ENCODE measurements at regions of chr5 and their contacts with region 1.

Region 1: DNA sequence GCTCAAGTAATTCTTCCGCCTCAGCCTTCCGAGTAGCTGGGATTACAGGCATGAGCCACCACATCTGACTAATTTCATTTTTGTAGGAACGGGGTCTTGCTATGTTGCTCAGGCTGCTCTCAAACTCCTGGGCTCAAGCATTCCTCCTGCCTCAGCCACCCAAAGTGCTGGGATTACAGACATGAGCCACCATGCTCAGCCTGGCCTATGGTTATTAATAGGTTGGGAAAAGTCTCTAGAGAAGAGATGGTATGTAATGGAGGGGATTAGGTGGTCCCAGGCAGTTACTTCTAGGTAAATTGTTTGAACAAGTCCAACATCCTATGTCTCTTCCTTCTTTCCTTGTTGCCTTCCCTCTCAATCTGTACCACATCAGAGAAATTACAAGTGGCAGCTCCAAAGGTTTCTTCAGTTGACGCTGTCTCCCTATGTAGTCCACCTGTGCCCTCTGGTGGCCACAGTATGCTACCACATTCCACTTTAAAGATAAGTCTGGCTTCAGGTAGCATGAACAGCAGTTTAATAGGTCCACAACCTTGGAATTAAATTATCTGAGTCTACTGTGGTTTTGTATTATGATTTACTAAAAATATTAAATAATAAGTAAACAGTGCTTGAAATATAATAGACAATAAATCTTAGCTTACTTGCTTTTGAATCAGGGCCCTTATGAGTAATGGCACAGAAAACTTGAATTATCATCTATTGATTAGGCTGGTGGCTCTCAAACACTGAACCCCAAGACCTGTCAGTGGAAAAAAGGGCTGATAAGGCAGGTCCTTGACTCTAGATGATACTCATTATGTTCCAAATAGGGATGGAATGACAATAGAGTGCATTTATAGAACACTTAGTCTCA is 9.7 kb downstream of the TIGD6 start:
- DNase-seq: peak; percentile 74
- ATAC-seq: peak; percentile 94
- H3K4me3 Mint-ChIP-seq: no peak overlapping the region
- H3K27ac Mint-ChIP-seq: no peak overlapping the region
- H3K4me1 Mint-ChIP-seq: no peaks in the 10 kb centered on the region
- H3K27me3 Mint-ChIP-seq: no peaks in the 10 kb centered on the region
- CTCF ChIP-seq: peak; percentile 88

Region 2: DNA sequence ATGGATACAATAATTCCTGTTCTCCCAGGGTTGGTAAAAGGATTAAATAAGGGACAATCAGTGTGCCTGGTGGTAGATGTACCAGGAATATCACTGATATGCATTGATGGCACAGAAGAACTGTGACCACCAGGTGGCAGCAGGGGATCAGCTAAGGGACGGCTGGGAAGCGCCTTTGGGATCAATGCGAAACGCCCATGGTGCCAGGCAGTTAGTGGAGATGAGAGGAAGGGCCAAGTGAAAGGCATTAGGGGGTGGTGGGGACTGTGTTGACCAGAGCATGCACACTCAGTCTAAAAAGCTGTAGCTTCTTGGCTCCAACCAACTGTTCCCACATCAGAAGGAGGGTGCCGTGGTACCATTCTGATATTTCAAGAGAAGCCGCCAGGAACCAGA is 353.9 kb before region 1 on chr5:
- CTCF ChIA-PET with region 1: interaction called, 12 read pairs
- POLR2A ChIA-PET with region 1: no interaction called
- DNase-seq: peak; percentile 50
- ATAC-seq: peak; percentile 78
- H3K4me3 Mint-ChIP-seq: no peak overlapping the region
- H3K27ac Mint-ChIP-seq: no peak overlapping the region
- H3K4me1 Mint-ChIP-seq: peaks cover 24% of the 10 kb centered on the region
- H3K27me3 Mint-ChIP-seq: no peaks in the 10 kb centered on the region
- CTCF ChIP-seq: peak; percentile 59; the same call in 1 of the 2 replicates

Region 3: GRCh38 chr5:149902177-149902576 is 88.6 kb before region 1 on chr5:
- CTCF ChIA-PET with region 1: interaction called, 12 read pairs
- POLR2A ChIA-PET with region 1: no interaction called
- DNase-seq: no peak
- ATAC-seq: peak; percentile 71
- H3K4me3 Mint-ChIP-seq: no peak overlapping the region
- H3K27ac Mint-ChIP-seq: no peak overlapping the region
- H3K4me1 Mint-ChIP-seq: no peaks in the 10 kb centered on the region
- H3K27me3 Mint-ChIP-seq: no peaks in the 10 kb centered on the region
- CTCF ChIP-seq: no peak

Region 4: DNA sequence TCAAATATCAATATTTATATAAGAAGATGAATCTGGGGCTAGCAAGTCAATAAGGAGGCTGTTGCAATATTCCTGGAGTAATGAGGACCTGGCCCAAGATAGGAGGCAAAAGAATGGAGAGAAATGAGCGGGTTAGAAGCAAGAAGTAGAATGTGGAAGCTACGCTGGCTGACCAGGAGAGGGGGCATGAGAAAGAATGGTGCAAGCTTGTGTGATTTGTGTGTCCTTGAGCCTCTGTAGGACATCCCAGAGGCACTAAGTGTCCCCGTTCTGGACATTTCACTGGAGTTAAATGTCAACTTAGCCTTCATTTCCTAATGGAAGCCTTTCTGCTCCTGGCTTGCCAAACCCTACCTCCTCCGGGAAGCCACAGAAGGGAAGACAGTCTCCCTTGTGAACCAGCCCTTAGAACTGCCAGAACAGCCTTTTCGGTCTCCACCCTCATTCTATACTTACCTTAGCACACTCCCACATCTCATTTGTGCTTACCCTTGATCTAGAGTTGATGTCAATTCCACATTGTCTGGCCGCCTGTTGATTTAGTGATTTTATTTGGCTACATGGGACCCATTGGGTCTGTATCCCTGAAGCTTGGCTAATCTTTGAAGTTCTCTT is 39.5 kb before region 1 on chr5:
- CTCF ChIA-PET with region 1: interaction called, 10 read pairs
- POLR2A ChIA-PET with region 1: no interaction called
- DNase-seq: no peak
- ATAC-seq: peak; percentile 77
- H3K4me3 Mint-ChIP-seq: no peak overlapping the region
- H3K27ac Mint-ChIP-seq: no peak overlapping the region
- H3K4me1 Mint-ChIP-seq: no peaks in the 10 kb centered on the region
- H3K27me3 Mint-ChIP-seq: no peaks in the 10 kb centered on the region
- CTCF ChIP-seq: no peak

Region 5: GRCh38 chr5:149960272-149961185 is 30.2 kb before region 1 on chr5 and contains the start of gene SLC26A2:
- CTCF ChIA-PET with region 1: interaction called, 23 read pairs
- POLR2A ChIA-PET with region 1: no interaction called
- DNase-seq: peak; percentile 97
- ATAC-seq: peak; percentile 98
- H3K4me3 Mint-ChIP-seq: peak within 1 kb of the TSS; percentile 79
- H3K27ac Mint-ChIP-seq: peak within 1 kb of the TSS; percentile 99
- H3K4me1 Mint-ChIP-seq: peaks cover 19% of the 10 kb centered on the region
- H3K27me3 Mint-ChIP-seq: peaks cover 8% of the 10 kb centered on the region; the same call in 1 of the 2 replicates
- CTCF ChIP-seq: no peak
- total RNA-seq, gene SLC26A2: 10.8 to 11.1 TPM (median 11.1 TPM) in 3 replicates

Measured in WTC11 (cell line).